ENCODE measurements at regions of chr11 and their contacts with region 1.

Region 1: GRCh38 chr11:65961232-65961901 is at the start of gene SART1:
- DNase-seq: peak; percentile 99
- ATAC-seq: peak; percentile 98
- H3K4me3 ChIP-seq: peak within 1 kb of the TSS; percentile 89
- H3K27ac ChIP-seq: peak within 1 kb of the TSS; percentile 94
- H3K4me1 ChIP-seq: peaks cover 6% of the 10 kb centered on the region
- H3K27me3 ChIP-seq: no peaks in the 10 kb centered on the region
- total RNA-seq, gene SART1: 34.3 to 41.7 (median 36.9) TPM

Region 2: DNA sequence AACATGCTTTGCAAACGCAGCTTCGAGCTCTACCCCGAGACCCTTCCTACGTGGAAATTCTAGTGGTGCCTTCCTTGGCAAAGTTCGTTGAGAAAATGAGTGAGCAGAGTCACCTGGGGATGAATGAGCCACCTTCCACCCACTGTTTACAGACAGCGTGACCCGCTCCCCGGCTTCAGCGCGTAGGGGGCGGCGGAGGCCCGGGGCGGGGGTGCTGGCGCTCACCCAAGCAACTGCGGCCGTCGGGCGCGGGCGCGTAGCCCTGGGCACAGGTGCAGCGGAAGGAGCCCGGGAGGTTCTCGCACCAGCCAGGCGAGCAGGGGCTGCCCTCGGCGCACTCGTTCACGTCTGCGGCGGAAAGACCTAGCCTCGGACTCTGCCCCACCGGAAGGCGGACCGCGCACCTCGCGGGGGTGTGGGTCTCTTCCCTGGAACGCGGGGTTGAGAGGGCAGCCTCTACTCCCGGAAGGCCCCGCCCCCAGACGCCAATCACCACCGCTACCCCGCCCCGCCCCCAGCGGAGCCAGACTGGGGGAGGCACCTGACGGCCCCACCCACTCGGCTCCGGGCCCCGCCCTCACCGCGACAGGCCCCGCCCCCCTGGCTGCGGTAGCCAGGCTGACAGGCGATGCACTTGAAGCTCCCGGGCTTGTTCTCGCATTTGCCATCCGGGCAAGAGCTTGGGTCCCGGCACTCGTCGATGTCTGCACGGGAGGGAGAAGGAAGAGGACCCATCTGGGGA is 415.0 kb before region 1 on chr11:
- intact Hi-C with region 1: no loop called
- DNase-seq: peak; percentile 83 to 95 (median 92)
- ATAC-seq: peak; percentile 79 to 83
- H3K4me3 ChIP-seq: no peak overlapping the region
- H3K27ac ChIP-seq: no peak overlapping the region
- H3K4me1 ChIP-seq: no peaks in the 10 kb centered on the region
- H3K27me3 ChIP-seq: no peaks in the 10 kb centered on the region

Region 3: GRCh38 chr11:65888163-65888814 is 73.1 kb before region 1 on chr11 and contains the start of gene FIBP:
- intact Hi-C with region 1: loop called in 2 of 4 experiments (anchors 5 to 10 kb)
- DNase-seq: peak; percentile 98 to 99 (median 99)
- ATAC-seq: peak; percentile 83 to 87
- H3K4me3 ChIP-seq: peak within 1 kb of the TSS; percentile 55
- H3K27ac ChIP-seq: peak within 1 kb of the TSS; percentile 97
- H3K4me1 ChIP-seq: peaks cover 7% of the 10 kb centered on the region
- H3K27me3 ChIP-seq: no peaks in the 10 kb centered on the region
- total RNA-seq, gene FIBP: 39.7 to 46.6 (median 42.8) TPM